Right ventricle myocardium superior (tissue), 1 donor: ENCODE measurements at regions of chr2 and their contacts with region 1.

Region 1: GRCh38 chr2:29923110-29923721 is 1.8 kb upstream of the ALK start:
- DNase-seq: peak; percentile 66
- ATAC-seq: peak; percentile 40

Region 2: DNA sequence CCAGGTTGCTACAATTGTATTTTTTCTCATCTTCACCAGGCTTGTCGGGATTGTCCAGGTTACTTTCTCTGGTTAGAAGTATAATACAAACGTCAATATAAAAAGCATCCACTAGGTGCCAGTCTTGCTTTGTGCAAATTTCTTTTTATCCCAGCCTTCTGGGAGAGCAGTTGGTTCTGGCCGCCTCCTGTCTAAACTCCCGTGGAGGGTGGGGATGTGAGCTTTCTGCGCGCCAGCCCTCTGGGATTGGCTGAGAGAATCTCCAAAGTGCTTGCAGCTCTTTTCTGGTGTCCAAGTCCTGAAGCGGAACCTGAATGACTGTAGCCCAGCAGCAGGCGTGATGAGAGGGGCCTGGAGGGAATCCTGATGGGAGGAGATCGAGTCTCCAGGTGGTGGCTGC is 964.5 kb before region 1 on chr2:
- intact Hi-C with region 1: loop called (anchors 10 kb)
- DNase-seq: peak; percentile 72
- ATAC-seq: peak; percentile 93

Region 3: GRCh38 chr2:29881089-29881733 is 42.0 kb before region 1 on chr2:
- intact Hi-C with region 1: no loop called
- DNase-seq: no peak
- ATAC-seq: no peak

Region 4: DNA sequence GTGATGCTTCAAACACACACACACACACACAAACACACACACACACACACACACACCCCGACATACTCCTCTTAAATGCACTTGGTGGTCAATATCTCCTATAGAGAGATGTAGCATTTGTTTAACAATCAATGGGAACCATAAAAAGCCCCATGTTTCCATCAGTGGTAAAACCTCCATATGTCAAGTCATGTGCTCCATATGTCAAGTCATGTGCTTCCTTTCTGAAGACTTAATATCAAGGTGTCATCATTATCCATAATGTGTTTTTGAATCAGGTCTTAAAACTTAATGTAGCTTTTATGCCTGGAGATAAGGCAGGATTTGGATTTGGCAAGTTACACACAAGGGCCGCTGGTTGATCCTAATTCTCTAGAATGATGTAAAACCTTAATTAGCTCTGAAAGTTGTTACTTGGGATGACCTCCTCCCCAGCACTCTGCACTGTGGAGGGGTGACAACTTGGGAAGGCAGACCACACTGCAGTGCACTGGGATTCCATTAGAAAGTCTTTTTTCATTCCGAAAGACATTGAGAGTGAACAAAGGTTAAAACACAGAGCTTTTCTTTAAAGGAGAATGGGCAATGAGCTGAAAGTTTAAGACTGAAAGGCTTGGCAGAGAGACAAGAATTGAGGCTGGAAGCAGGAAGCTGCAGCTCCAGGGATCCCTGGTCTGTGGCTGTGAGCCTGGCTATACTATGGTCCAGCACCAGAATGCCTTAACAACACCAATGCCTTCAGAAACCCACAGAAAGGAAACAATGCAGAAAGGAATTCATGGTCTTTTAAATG is 28.2 kb before region 1 on chr2:
- intact Hi-C with region 1: no loop called
- DNase-seq: no peak
- ATAC-seq: no peak

Region 5: GRCh38 chr2:30026087-30027055 is 103.2 kb after region 1 on chr2:
- intact Hi-C with region 1: loop called (anchors 5 kb)
- DNase-seq: peak; percentile 69
- ATAC-seq: peak; percentile 75

Region 6: GRCh38 chr2:30072250-30072842 is 149.1 kb after region 1 on chr2:
- intact Hi-C with region 1: loop called (anchors 2 kb)
- DNase-seq: peak; percentile 51
- ATAC-seq: peak; percentile 92

Region 7: GRCh38 chr2:30095402-30095801 is 172.2 kb after region 1 on chr2:
- intact Hi-C with region 1: no loop called
- DNase-seq: no peak
- ATAC-seq: no peak